PC-3 (cell line): ENCODE measurements at regions of chr19 and their contacts with region 1.

Region 1: DNA sequence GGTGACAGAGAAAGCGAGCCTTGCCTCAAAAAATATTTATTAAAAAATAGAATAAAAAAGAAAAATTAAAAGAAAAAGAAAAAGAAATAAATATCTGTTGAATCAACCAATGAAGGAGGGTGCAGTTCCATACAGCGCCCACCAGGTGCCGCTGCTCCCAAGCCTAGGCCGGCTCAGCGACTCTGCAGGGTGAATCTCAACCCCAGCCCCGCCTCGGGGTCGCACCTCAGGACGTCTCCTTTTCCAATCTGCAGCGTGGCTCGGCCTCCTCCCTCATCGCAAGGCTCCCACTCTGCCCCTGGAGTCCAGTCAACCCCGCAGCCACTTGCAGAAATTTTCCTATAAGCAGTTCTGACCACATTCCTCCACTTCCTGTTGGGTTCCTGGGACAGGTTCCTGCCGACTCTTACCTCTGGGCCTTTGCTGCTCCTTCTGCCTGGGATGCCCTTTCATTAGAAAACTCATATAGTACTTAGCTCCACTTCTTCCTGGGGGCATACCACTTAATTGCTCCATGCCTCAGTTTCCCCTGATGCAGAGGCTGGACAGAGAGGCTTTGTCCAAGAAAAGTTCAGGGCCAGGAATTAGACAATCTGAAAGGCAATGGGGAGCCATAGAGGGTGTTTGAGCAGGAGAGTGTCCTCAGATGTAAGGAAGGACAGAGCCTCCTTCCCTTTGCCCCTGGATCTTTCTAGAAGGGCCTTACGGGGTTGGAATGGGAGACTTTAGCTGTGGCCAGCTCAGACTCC is 24.3 kb downstream of the NFILZ start:
- DNase-seq: peak; percentile 65
- ATAC-seq: peak; percentile 73
- H3K4me3 ChIP-seq: peak overlapping the region; percentile 37; the same call in 1 of the 2 replicates
- H3K27ac ChIP-seq: no peak overlapping the region
- H3K4me1 ChIP-seq: no peaks in the 10 kb centered on the region
- H3K27me3 ChIP-seq: peaks cover 56% of the 10 kb centered on the region
- CTCF ChIP-seq: peak; percentile 86

Region 2: DNA sequence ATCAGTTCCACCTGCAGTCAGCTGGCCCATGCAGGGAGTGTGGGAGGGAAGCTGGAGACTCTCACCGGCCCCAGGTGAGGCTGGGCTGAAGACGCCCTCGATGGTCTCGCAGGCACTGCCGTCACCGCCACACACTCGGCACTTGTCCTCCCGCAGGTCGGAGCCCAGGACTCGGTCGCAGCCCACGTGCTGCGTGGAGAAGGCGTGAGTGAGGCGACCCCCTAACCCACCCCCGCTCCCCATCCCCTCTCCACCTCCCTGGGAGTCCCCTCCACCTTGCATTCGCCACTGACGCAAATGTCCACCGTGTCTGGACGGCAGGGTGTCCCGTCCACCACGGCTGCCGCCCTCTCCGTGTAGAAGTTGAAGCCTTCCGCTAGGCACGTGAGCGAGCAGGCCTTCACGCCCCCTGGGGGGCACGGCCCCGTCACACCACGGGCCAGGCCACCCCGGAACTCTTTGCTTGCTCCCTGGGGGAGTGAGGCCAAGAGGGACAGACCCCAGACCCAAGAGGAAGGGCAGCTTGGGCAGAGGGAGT is 65.5 kb before region 1 on chr19:
- CTCF ChIA-PET with region 1: no interaction called
- POLR2A ChIA-PET with region 1: no interaction called
- intact Hi-C with region 1: no loop called
- DNase-seq: no peak
- ATAC-seq: no peak
- H3K4me3 ChIP-seq: no peak overlapping the region
- H3K27ac ChIP-seq: no peak overlapping the region
- H3K4me1 ChIP-seq: no peaks in the 10 kb centered on the region
- H3K27me3 ChIP-seq: peaks cover 21% of the 10 kb centered on the region
- CTCF ChIP-seq: no peak

Region 3: DNA sequence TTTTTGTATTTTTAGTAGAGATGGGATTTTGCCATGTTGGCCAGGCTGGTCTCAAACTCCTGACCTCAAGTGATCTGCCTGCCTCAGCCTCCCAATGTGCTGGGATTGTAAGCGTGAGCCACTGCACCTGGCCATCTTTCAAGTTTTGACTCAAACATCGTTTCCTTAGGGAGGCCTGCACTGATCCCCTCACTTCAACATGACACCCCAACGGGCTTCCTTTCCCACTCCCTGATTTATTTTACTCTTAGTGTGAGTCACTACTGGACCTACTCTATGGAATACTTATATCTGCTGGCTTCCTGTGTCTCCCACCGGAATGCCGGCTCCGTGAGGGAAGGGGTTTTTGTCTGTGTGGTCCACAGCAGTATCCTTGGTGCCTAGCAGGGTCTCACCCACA is 39.7 kb before region 1 on chr19:
- CTCF ChIA-PET with region 1: interaction called, 12 read pairs
- POLR2A ChIA-PET with region 1: no interaction called
- intact Hi-C with region 1: no loop called
- DNase-seq: no peak
- ATAC-seq: no peak; the same call in 1 of the 2 replicates
- H3K4me3 ChIP-seq: no peak overlapping the region
- H3K27ac ChIP-seq: no peak overlapping the region
- H3K4me1 ChIP-seq: no peaks in the 10 kb centered on the region
- H3K27me3 ChIP-seq: peaks cover 3% of the 10 kb centered on the region
- CTCF ChIP-seq: no peak

Region 4: GRCh38 chr19:8641908-8642547 is 12.7 kb before region 1 on chr19:
- CTCF ChIA-PET with region 1: interaction called, 11 read pairs
- POLR2A ChIA-PET with region 1: no interaction called
- intact Hi-C with region 1: no loop called
- DNase-seq: peak; percentile 70
- ATAC-seq: peak; percentile 40; the same call in 1 of the 2 replicates
- H3K4me3 ChIP-seq: no peak overlapping the region
- H3K27ac ChIP-seq: no peak overlapping the region
- H3K4me1 ChIP-seq: peaks cover 8% of the 10 kb centered on the region
- H3K27me3 ChIP-seq: 0 out of 2 replicates have a peak, but pooled peaks cover 7% of the 10 kb centered on the region
- CTCF ChIP-seq: peak; percentile 71